ENCODE measurements at regions of chr4 and their contacts with region 1.

Region 1: DNA sequence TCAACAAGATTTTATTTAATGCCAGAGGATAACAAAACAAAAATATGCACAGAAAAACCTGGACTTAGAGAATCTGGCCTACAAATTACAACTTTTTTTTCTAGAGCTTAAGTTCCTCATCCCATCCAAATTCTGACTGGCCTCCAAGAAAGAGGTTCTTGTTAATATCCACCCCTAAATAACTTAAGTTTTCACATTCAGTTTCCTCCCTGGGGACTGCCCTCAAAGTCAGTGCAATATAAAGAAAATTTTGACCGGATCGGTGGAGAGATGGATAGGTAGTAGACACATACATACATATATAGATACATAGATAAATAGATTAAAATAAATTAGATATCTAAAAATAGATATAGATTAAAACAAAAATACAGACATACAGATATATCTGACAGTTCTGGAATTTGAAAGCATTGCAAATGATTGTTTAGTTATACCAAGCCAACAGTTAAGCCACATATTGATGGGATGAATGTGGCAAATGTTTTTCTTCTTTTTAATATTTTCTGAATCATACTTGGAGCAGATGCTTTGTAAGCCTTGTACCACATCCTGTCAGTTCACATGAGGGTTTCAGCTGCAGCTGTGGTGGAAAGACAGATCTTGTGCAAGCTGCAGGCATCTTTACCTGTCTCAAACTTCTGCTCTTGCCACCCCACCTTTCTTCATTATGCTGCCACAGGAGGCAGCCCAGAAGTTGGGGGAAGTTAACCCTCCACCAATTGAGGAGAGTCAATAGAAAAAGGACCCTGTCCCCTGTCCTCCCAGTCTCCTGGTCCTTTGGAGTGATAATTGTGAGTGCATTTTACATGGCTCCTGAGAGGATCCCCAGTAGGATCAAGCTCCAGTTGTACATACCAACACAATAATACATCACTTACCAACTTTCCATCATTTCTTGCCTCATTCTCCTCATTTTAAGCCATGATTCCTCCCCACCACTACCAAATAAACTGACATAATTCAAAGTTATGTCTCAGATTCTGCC is 58.5 kb upstream of the PRDM8 start:
- DNase-seq: peak; percentile 82
- ATAC-seq: peak; percentile 72
- H3K4me3 ChIP-seq: no peak overlapping the region
- H3K27ac ChIP-seq: no peak overlapping the region
- H3K4me1 ChIP-seq: peaks cover 5% of the 10 kb centered on the region
- H3K27me3 ChIP-seq: no peaks in the 10 kb centered on the region
- CTCF ChIP-seq: no peak
- POLR2A ChIP-seq: no peak
- RAD21 ChIP-seq: no peak

Region 2: GRCh38 chr4:79987401-79987800 is 151.4 kb before region 1 on chr4:
- CTCF ChIA-PET with region 1: no interaction called
- POLR2A ChIA-PET with region 1: no interaction called
- dilution Hi-C with region 1: no loop called
- in situ Hi-C with region 1: no loop called
- intact Hi-C with region 1: no loop called
- DNase-seq: peak; percentile 16
- ATAC-seq: no peak
- H3K4me3 ChIP-seq: no peak overlapping the region
- H3K27ac ChIP-seq: no peak overlapping the region
- H3K4me1 ChIP-seq: no peaks in the 10 kb centered on the region
- H3K27me3 ChIP-seq: no peaks in the 10 kb centered on the region
- CTCF ChIP-seq: no peak
- POLR2A ChIP-seq: no peak
- RAD21 ChIP-seq: no peak

Region 3: GRCh38 chr4:80173401-80173800 is 34.6 kb after region 1 on chr4:
- CTCF ChIA-PET with region 1: no interaction called
- POLR2A ChIA-PET with region 1: no interaction called
- dilution Hi-C with region 1: no loop called
- in situ Hi-C with region 1: no loop called
- intact Hi-C with region 1: loop called (anchors 5 kb)
- DNase-seq: peak; percentile 88
- ATAC-seq: peak; percentile 76
- H3K4me3 ChIP-seq: no peak overlapping the region
- H3K27ac ChIP-seq: no peak overlapping the region
- H3K4me1 ChIP-seq: peaks cover 2% of the 10 kb centered on the region; the same call in 1 of the 2 replicates
- H3K27me3 ChIP-seq: no peaks in the 10 kb centered on the region
- CTCF ChIP-seq: no peak
- POLR2A ChIP-seq: no peak
- RAD21 ChIP-seq: no peak

Measured in IMR-90 (cell line).